Esophagus squamous epithelium (tissue), 5 donors: ENCODE measurements at regions of chr10 and their contacts with region 1.

Region 1: DNA sequence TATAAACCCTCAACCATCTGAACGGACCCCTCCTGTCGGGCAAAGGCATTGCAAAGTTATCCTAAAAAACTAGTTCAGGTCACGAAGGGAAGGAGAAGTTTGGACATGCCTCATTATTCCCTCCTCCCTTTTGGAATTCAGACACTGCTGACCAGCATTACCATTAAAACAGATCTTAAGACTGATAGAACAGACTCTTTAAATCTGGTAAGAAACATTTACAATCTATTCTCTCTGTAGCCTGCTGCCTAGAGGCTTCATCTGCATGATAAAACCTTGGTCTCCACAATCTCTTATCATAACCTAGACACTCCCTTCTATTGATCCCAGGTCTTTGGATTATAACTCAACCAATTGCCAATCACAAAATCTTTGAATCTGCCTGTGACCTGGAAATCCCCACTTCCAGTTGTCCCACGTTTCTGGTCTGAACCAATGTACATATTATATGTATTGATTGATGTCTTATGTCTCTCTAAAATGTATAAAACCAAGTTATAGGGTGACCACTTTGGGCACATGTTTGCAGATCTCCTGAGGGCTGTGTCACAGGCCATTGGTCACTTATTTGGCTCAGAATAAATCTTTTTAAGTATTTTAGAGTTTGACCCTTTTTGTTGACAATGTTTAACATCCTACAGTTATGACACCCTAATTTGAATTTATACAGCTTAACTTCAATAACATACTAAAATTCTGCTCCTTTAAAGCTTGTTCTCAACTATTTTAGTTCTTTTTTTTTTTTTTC is 23.5 kb upstream of the CNNM2 start:
- DNase-seq: no peak
- H3K4me3 ChIP-seq: no peak overlapping the region
- H3K27ac ChIP-seq: no peak overlapping the region
- H3K4me1 ChIP-seq: no peaks in the 10 kb centered on the region
- H3K27me3 ChIP-seq: no peaks in the 10 kb centered on the region
- CTCF ChIP-seq: no peak
- POLR2A ChIP-seq: no peak

Region 2: DNA sequence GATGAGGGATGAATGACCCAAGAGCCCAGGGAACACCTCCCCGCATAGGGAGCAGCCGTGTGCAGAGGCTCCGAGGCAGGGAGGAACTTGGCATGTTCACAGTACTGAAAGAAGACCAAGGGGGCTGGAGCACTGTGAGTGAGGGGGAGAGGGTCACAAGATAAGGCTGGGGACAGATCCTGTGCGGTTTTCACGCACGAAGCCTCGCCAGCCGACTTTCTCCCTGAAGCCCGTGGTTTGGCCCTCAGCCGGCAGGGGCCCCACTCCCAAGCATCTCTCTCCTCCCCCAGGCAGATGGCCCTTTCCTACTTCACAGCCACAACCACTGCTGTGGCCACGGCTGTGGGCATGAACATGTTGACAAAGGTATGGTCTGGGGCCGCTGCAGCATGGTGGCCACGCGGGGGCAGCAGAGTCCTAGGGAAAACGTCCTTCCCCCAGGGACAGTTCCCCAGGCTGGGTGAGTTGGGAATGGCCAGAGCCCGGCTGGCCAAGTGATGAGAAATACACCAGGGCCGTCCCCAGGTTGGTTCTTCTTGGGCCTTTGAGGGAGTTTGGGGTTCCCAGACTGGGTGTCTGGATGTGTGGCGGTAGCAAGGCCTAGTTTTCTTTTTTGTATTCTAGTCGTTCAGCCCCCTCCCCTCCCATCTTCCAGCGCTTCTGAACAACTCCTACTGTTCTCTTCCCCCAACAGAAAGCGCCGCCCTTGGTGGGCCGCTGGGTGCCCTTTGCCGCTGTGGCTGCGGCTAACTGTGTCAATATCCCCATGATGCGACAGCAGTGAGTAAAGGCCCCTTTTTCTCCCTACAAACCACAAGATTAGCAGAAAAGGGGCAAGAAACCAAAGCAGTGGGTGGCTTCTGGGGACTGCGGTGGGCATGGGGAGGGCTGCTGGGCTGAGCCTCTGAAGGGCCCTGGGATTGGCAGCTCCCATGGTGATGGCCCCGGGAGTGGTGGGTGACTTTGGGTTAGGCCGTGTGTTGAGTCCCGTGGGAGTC is 165.3 kb before region 1 on chr10:
- intact Hi-C with region 1: loop called (anchors 5 kb)
- DNase-seq: no peak
- H3K4me3 ChIP-seq: no peak overlapping the region
- H3K27ac ChIP-seq: peak overlapping the region in 1 of 4 donors; percentile 9
- H3K4me1 ChIP-seq: peaks cover 0 to 12% (median 0%) of the 10 kb centered on the region in 3 donors
- H3K27me3 ChIP-seq: no peaks in the 10 kb centered on the region
- CTCF ChIP-seq: peak; percentile 64 to 90 (median 84)
- POLR2A ChIP-seq: no peak